HEK293 (cell line): ENCODE measurements at regions of chr11 and their contacts with region 1.

Region 1: DNA sequence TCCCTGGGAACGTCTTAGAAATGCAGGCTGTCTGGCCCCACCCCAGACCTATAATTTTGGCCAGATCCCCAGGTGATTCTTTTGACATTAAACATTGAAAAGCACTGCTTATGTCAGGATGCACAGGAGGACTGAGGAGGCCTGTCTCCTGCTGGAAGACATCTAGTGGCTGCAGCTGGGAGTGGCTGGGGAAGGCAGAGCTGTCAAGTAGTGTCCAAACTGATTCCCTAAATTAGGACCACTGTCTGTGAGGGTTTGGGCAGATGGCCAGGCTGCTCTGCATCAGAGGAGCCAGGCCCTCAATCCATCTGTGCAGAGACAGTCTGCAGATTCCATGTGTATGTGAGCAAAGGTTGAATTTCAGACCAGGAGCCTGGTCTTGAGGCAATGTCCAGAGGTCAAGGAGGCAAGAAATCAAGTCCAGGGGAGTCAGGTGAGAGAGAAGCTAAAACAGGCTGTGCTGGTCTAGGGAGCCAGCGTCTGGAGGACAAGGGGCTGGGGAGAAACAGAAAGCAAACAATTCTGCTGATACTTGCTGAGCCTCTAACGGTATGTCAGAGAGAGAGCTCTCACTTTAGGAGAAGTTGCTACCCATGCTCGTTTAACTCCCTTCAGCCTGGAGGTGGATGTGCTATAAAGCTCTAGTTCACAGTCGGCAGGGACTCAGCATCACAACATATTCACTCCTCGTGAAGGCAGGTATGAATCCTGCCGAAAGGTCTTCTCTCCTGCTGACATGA is 15.3 kb upstream of the SYTL2 start:
- H3K4me3 ChIP-seq: no peak overlapping the region
- H3K27ac ChIP-seq: no peak overlapping the region
- H3K4me1 ChIP-seq: peaks cover 10% of the 10 kb centered on the region
- CTCF ChIP-seq: peak; percentile 16; the same call in 1 of the 2 replicates

Region 2: GRCh38 chr11:85694386-85694980 is 131.8 kb before region 1 on chr11:
- CTCF ChIA-PET with region 1: interaction called, 18 read pairs
- POLR2A ChIA-PET with region 1: no interaction called
- H3K4me3 ChIP-seq: no peak overlapping the region
- H3K27ac ChIP-seq: no peak overlapping the region
- H3K4me1 ChIP-seq: no peaks in the 10 kb centered on the region
- CTCF ChIP-seq: no peak

Region 3: GRCh38 chr11:85810871-85811611 is 15.2 kb before region 1 on chr11 and contains the start of gene SYTL2:
- CTCF ChIA-PET with region 1: interaction called, 21 read pairs
- POLR2A ChIA-PET with region 1: no interaction called
- H3K4me3 ChIP-seq: peak within 1 kb of the TSS; percentile 47
- H3K27ac ChIP-seq: no peak within 1 kb of the TSS
- H3K4me1 ChIP-seq: no peaks in the 10 kb centered on the region
- CTCF ChIP-seq: 0 out of 2 replicates have a peak, but pooled peaks have one; percentile 16

Region 4: DNA sequence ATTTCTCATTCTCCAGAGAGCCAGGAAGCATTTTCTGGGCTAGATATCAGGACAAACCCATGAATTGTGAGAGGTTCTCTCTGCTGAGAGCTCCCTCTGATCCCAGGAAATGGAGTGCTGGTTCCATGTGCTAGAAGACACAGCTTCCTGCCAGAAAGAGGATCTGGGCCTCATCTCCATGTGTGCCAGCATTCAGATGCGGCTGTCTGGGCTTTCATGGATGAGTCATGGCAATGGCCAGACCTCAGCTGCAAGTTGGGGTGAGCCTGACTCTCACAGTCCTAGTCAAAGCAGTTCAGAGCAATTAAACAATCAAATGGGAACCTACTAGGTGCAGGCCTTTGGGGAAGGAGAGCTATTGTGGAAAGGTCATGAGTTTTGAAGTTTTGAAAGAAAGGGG is 336.0 kb after region 1 on chr11:
- CTCF ChIA-PET with region 1: no interaction called
- POLR2A ChIA-PET with region 1: no interaction called
- H3K4me3 ChIP-seq: no peak overlapping the region
- H3K27ac ChIP-seq: no peak overlapping the region
- H3K4me1 ChIP-seq: no peaks in the 10 kb centered on the region
- CTCF ChIP-seq: no peak